HepG2 (cell line): ENCODE measurements at regions of chr19 and their contacts with region 1.

Region 1: DNA sequence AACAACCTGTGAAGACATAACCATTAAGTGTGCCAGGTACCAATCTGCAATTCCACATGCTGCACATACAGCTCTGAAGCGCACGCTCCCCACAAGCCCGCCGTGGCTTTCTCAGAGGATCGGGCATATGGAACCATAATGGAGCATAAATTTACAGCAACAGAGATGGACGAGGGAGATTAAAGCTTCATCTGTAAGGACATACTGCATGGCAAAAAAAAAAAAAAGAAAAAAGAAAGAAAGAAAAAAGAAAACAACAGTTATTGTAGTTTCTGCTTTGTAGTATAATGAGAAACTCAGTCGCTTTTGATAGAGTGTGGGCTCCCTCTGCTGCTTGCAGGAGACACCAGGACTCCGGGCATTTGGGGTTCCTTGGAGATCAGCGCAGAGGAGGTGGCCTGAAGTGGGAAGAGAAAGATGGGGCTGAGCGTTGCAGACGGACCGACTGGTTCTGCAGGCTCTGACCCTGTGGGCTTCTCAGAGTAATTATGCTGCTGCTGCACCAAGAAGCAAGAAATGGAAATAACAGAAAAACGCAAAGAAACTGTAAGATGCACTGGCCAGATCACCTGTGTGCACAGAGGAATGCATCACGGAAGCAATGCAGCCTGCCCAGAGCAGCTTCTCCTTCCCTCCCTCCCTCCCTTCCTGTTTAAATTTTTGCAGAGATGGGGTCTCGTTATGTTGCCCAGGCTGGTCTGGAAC is 10.8 kb upstream of the PDCD5 start:
- DNase-seq: peak; percentile 62
- ATAC-seq: peak; percentile 97
- H3K4me3 ChIP-seq: no peak overlapping the region
- H3K27ac ChIP-seq: no peak overlapping the region
- H3K4me1 ChIP-seq: no peaks in the 10 kb centered on the region
- H3K27me3 ChIP-seq: peaks cover 0 to 10% of the 10 kb centered on the region in 2 experiments; a peak in 2 of 5 replicates
- CTCF ChIP-seq: peak; percentile 82
- EP300 ChIP-seq: no peak
- POLR2A ChIP-seq: no peak
- RAD21 ChIP-seq: peak; percentile 70

Region 2: GRCh38 chr19:30669329-30670010 is 1900.8 kb before region 1 on chr19:
- CTCF ChIA-PET with region 1: no interaction called
- POLR2A ChIA-PET with region 1: no interaction called
- in situ Hi-C with region 1: loop called (anchors 10 kb)
- intact Hi-C with region 1: no loop called
- DNase-seq: peak; percentile 30
- ATAC-seq: peak; percentile 63
- H3K4me3 ChIP-seq: no peak overlapping the region
- H3K27ac ChIP-seq: no peak overlapping the region
- H3K4me1 ChIP-seq: peaks cover 15% of the 10 kb centered on the region
- H3K27me3 ChIP-seq: peaks cover 0 to 3% of the 10 kb centered on the region in 2 experiments; a peak in 1 of 5 replicates
- CTCF ChIP-seq: peak; percentile 80
- EP300 ChIP-seq: no peak
- POLR2A ChIP-seq: no peak
- RAD21 ChIP-seq: peak; percentile 31; the same call in 1 of the 2 replicates

Region 3: DNA sequence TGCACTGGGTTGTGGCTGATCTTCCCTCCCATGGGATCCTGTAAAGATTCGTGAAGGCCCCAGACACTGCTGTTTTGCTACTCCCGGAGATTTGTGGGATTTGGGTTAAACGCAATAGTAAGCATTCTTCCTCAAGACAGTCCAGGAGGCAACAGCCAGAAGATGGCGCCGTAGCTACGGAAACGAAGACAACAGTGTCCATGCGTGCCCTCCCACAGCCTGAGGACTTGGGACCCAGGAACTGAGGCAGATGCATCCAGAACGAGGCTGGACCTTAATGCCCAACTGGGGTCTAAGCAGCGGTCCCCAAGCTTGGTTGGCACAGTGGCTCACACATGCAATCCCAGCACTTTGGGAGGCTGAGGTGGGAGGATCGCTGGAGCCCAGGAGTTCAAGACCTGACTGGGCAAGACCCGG is 282.4 kb before region 1 on chr19:
- CTCF ChIA-PET with region 1: interaction called, 25 read pairs
- POLR2A ChIA-PET with region 1: no interaction called
- in situ Hi-C with region 1: loop called (anchors 10 kb)
- intact Hi-C with region 1: no loop called
- DNase-seq: peak; percentile 67
- ATAC-seq: peak; percentile 92
- H3K4me3 ChIP-seq: peak overlapping the region; percentile 11 to 51 (median 28); a peak in 3 of 6 replicates
- H3K27ac ChIP-seq: no peak overlapping the region
- H3K4me1 ChIP-seq: peaks cover 9% of the 10 kb centered on the region; the same call in 1 of the 2 replicates
- H3K27me3 ChIP-seq: no peaks in the 10 kb centered on the region; a peak in 2 of 5 replicates
- CTCF ChIP-seq: peak; percentile 95
- EP300 ChIP-seq: no peak
- POLR2A ChIP-seq: no peak
- RAD21 ChIP-seq: peak; percentile 75

Region 4: GRCh38 chr19:32339988-32340874 is 230.0 kb before region 1 on chr19:
- CTCF ChIA-PET with region 1: no interaction called
- POLR2A ChIA-PET with region 1: no interaction called
- in situ Hi-C with region 1: no loop called
- intact Hi-C with region 1: loop called (anchors 1 kb)
- DNase-seq: peak; percentile 46
- ATAC-seq: peak; percentile 87
- H3K4me3 ChIP-seq: no peak overlapping the region; a peak in 1 of 6 replicates
- H3K27ac ChIP-seq: no peak overlapping the region
- H3K4me1 ChIP-seq: peaks cover 46% of the 10 kb centered on the region
- H3K27me3 ChIP-seq: no peaks in the 10 kb centered on the region
- CTCF ChIP-seq: peak; percentile 84
- EP300 ChIP-seq: no peak
- POLR2A ChIP-seq: no peak
- RAD21 ChIP-seq: peak; percentile 56; the same call in 1 of the 2 replicates

Region 5: DNA sequence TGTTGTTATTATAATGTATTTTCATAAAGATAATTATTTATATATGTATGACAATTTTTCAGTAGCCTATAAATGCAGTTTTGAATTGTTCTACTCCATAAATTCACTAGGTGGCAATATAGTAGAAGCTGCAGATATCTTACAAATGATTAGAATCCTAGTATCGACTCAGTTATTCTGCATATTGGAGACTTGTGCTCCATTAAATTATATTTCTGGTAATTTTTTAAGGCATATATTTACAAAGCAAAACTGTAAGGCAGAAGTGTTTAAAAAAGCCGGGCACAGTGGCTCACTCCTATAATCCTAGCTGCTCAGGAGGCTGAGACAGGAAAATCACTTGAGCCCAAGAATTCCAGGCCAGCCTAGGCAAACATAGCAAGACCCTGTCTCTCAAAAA is 106.0 kb before region 1 on chr19:
- CTCF ChIA-PET with region 1: interaction called, 8 read pairs
- POLR2A ChIA-PET with region 1: no interaction called
- in situ Hi-C with region 1: no loop called
- intact Hi-C with region 1: loop called (anchors 1 kb)
- DNase-seq: no peak
- ATAC-seq: no peak
- H3K4me3 ChIP-seq: no peak overlapping the region
- H3K27ac ChIP-seq: no peak overlapping the region
- H3K4me1 ChIP-seq: peaks cover 6% of the 10 kb centered on the region
- H3K27me3 ChIP-seq: no peaks in the 10 kb centered on the region
- CTCF ChIP-seq: no peak
- EP300 ChIP-seq: no peak
- POLR2A ChIP-seq: no peak
- RAD21 ChIP-seq: no peak

Region 6: GRCh38 chr19:32631381-32631780 is 61.1 kb after region 1 on chr19:
- CTCF ChIA-PET with region 1: no interaction called
- POLR2A ChIA-PET with region 1: no interaction called
- in situ Hi-C with region 1: no loop called
- intact Hi-C with region 1: no loop called
- DNase-seq: no peak
- ATAC-seq: no peak
- H3K4me3 ChIP-seq: no peak overlapping the region
- H3K27ac ChIP-seq: no peak overlapping the region
- H3K4me1 ChIP-seq: no peaks in the 10 kb centered on the region
- H3K27me3 ChIP-seq: no peaks in the 10 kb centered on the region
- CTCF ChIP-seq: no peak
- EP300 ChIP-seq: no peak
- POLR2A ChIP-seq: no peak
- RAD21 ChIP-seq: no peak